ENCODE measurements at regions of chr17 and their contacts with region 1.

Region 1: GRCh38 chr17:34637548-34638525 is 58.5 kb downstream of the TMEM132E start:
- DNase-seq: peak; percentile 55 to 88 (median 77)
- ATAC-seq: peak; percentile 99
- H3K4me3 ChIP-seq: peak overlapping the region; percentile 5 to 22
- H3K27ac ChIP-seq: no peak overlapping the region
- H3K4me1 ChIP-seq: peaks cover 4 to 8% of the 10 kb centered on the region in 2 donors
- H3K27me3 ChIP-seq: peaks cover 13 to 99% of the 10 kb centered on the region in 2 donors
- CTCF ChIP-seq: peak; percentile 84 to 89

Region 2: GRCh38 chr17:34420254-34420766 is 217.5 kb before region 1 on chr17:
- intact Hi-C with region 1: loop called in 1 of 2 experiments (anchors 10 kb)
- DNase-seq: peak in 2 of 4 donors; percentile 44 to 65
- ATAC-seq: peak; percentile 88
- H3K4me3 ChIP-seq: no peak overlapping the region
- H3K27ac ChIP-seq: no peak overlapping the region
- H3K4me1 ChIP-seq: no peaks in the 10 kb centered on the region
- H3K27me3 ChIP-seq: peaks cover 12 to 72% of the 10 kb centered on the region in 2 donors
- CTCF ChIP-seq: peak; percentile 96 to 98

Measured in left lung (tissue), 14 donors.